Ovary (tissue), 10 donors: ENCODE measurements at regions of chr2 and their contacts with region 1.

Region 1: GRCh38 chr2:134304394-134305108 is 50.7 kb downstream of the MGAT5 start:
- DNase-seq: no peak
- H3K4me3 ChIP-seq: no peak overlapping the region
- H3K27ac ChIP-seq: no peak overlapping the region
- H3K4me1 ChIP-seq: peaks cover 4% of the 10 kb centered on the region
- H3K27me3 ChIP-seq: no peaks in the 10 kb centered on the region
- CTCF ChIP-seq: no peak
- EP300 ChIP-seq: no peak
- POLR2A ChIP-seq: no peak

Region 2: DNA sequence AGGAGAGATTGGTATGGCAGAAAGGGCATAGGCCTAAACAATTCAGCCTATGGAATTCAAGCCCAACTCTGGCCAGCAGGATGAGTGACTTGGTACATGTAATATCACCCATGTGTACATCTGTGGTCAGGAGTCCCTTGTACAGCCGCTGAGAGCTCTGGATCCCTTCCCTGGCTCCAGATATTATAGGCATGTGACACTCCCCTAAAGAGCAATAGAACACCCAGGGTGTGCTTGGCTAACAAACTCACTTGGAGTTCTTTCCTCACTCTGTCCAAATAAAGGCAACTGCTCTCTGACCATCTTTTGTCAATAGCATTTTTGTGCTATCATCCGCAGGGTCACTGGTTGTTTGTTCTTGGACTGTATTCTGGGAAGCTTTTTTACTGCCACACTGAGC is 538.9 kb before region 1 on chr2:
- intact Hi-C with region 1: no loop called
- DNase-seq: no peak
- H3K4me3 ChIP-seq: no peak overlapping the region
- H3K27ac ChIP-seq: no peak overlapping the region
- H3K4me1 ChIP-seq: peaks cover 5% of the 10 kb centered on the region
- H3K27me3 ChIP-seq: no peaks in the 10 kb centered on the region
- CTCF ChIP-seq: no peak
- EP300 ChIP-seq: no peak
- POLR2A ChIP-seq: no peak

Region 3: GRCh38 chr2:134347756-134348155 is 43.2 kb after region 1 on chr2:
- intact Hi-C with region 1: loop called in 1 of 4 experiments (anchors 2 kb)
- DNase-seq: no peak
- H3K4me3 ChIP-seq: no peak overlapping the region
- H3K27ac ChIP-seq: peak overlapping the region in 1 of 2 donors; percentile 68
- H3K4me1 ChIP-seq: peaks cover 7% of the 10 kb centered on the region
- H3K27me3 ChIP-seq: no peaks in the 10 kb centered on the region
- CTCF ChIP-seq: no peak
- EP300 ChIP-seq: no peak
- POLR2A ChIP-seq: no peak